Activated B cell treated with CpG ODN at 0.5 μM for 24 hours (primary cell): ENCODE measurements at regions of chr11 and their contacts with region 1.

Region 1: DNA sequence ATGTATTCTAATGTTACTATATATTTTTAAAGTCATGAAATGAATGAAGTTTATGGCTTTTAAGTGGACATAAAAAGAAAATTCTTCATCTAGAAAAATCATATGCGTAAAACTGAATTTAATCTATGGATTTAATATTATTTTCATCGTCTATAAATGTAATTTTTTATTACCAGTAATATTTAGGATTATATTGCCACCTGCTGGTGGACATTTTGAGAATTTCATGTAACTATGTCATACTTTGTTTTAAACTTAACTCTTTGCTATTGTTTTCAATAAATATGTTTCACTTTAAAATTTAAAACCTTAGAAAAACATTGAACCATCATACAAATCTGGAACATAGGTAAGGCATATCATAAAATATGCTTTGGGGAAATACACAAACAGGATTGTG is 66.5 kb upstream of the CEP126 start:
- DNase-seq: no peak
- ATAC-seq: no peak
- H3K4me3 Mint-ChIP-seq: no peak overlapping the region
- H3K27ac Mint-ChIP-seq: no peak overlapping the region
- H3K4me1 Mint-ChIP-seq: no peaks in the 10 kb centered on the region
- H3K27me3 Mint-ChIP-seq: peaks cover 4% of the 10 kb centered on the region
- CTCF ChIP-seq: no peak

Region 2: DNA sequence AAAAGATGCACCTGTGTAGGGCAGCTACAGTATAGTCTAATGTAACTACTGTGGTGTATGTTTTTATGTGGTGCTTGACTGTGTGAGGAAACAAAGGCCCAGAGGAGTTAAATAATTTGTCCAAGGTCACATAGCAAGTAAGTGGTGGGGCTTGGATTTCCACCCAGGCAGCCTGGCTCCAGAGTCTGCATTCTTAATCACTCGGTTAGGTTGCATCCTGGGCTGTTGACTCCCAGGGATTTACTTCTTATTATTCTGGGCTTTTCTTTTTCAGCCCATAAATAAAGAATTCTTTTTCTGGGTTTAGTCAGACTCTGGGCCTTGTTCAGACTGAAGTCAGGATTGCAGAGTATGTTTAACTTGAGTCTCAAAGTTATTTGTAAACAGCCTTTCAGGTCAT is 1079.1 kb before region 1 on chr11:
- CTCF ChIA-PET with region 1: no interaction called
- POLR2A ChIA-PET with region 1: no interaction called
- intact Hi-C with region 1: no loop called
- DNase-seq: no peak
- ATAC-seq: no peak
- H3K4me3 Mint-ChIP-seq: no peak overlapping the region
- H3K27ac Mint-ChIP-seq: no peak overlapping the region
- H3K4me1 Mint-ChIP-seq: no peaks in the 10 kb centered on the region
- H3K27me3 Mint-ChIP-seq: no peaks in the 10 kb centered on the region
- CTCF ChIP-seq: no peak

Region 3: DNA sequence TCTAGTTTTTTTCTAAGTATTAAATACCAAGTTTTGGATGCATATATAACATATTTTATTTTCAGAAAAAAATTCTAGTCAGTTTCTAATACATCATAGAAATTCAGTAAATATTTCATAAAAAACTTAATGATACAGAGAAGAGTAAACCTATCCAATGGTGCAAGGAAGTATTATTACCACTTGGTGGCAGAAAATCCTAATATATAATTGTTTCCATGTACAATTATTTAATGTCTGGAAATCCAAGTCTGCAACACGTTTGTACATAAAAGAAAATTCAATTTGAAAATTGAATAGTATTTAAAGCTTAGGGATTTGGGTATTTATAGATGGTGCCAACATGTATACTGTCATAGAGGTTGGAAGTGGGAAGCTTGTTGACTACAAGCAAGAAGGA is 391.4 kb before region 1 on chr11:
- CTCF ChIA-PET with region 1: interaction called, 9 read pairs
- POLR2A ChIA-PET with region 1: no interaction called
- intact Hi-C with region 1: loop called (anchors 1 kb)
- DNase-seq: no peak
- ATAC-seq: no peak
- H3K4me3 Mint-ChIP-seq: no peak overlapping the region
- H3K27ac Mint-ChIP-seq: no peak overlapping the region
- H3K4me1 Mint-ChIP-seq: no peaks in the 10 kb centered on the region
- H3K27me3 Mint-ChIP-seq: no peaks in the 10 kb centered on the region
- CTCF ChIP-seq: no peak

Region 4: DNA sequence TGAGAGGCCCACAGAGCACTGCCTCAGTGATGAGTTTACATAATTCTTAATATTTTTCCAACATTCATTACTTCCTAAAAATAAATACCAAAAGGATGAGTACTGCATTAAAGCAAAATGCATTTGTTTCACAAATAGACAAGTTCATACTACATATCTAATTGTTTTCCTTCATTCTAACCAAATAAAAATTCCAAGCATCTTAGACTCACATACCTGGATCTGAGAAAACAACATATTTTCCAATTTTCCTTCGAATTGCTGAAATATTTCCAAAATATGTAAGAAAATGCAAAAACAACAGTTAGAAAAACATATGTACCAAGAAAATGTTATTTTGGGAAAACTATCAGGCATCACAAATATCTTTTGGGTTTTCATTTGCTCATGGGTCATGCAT is 61.3 kb before region 1 on chr11:
- CTCF ChIA-PET with region 1: no interaction called
- POLR2A ChIA-PET with region 1: no interaction called
- intact Hi-C with region 1: no loop called
- DNase-seq: no peak
- ATAC-seq: no peak
- H3K4me3 Mint-ChIP-seq: no peak overlapping the region
- H3K27ac Mint-ChIP-seq: no peak overlapping the region
- H3K4me1 Mint-ChIP-seq: no peaks in the 10 kb centered on the region
- H3K27me3 Mint-ChIP-seq: no peaks in the 10 kb centered on the region
- CTCF ChIP-seq: no peak

Region 5: DNA sequence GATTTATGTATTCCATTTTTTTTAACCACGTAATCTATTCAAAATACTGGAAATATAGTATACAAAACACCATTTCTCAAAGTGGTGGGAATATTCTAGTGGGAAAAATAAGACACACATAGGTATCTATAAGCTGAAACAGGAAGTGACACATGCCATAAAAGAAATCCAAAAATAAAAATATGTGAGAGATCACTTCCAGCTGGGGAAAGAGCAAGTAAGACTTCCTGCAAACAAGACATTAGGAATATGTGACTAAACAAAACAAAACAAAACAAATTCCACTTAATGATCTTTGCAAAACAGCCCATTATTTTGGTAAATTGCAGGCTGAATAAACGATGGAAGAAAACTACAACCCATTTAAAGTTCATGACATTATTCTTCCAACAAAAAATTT is 40.7 kb before region 1 on chr11:
- CTCF ChIA-PET with region 1: no interaction called
- POLR2A ChIA-PET with region 1: no interaction called
- intact Hi-C with region 1: no loop called
- DNase-seq: no peak
- ATAC-seq: no peak
- H3K4me3 Mint-ChIP-seq: no peak overlapping the region
- H3K27ac Mint-ChIP-seq: no peak overlapping the region
- H3K4me1 Mint-ChIP-seq: no peaks in the 10 kb centered on the region
- H3K27me3 Mint-ChIP-seq: no peaks in the 10 kb centered on the region
- CTCF ChIP-seq: no peak

Region 6: DNA sequence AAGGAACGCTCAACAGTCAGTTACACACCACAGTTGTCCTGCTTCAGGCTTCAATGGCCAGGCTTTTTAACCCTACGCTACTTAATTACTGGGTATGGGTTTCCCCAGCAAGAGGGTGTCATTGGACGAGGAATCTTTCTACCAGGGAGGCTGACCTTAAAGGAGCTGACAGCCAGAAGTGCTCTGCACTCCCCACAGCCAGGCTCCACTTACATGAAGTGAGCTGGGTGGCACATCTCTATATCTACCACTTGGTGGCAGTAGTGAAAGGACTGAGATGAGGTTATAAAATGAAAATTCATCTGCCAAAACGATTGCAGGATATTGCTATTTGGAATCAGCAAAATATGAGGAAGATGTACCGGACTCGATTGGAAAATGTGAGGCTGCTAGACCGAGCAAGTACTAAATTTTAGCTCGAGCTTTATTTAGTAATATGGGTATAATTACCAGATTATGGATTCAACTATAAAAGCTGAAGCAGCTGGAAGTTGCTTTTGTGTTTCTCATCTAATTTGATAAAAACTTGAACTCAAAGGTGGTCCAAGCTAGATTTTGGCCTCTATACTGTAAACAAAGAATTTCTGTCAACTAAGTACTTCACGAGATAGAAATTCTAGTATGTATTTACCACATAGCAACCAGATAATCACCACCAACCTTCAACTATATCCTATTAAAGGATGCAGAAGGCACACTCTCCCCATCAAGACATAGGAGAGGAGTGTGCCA is 12.6 kb after region 1 on chr11:
- CTCF ChIA-PET with region 1: interaction called, 13 read pairs
- POLR2A ChIA-PET with region 1: no interaction called
- intact Hi-C with region 1: no loop called
- DNase-seq: no peak
- ATAC-seq: peak; percentile 52
- H3K4me3 Mint-ChIP-seq: no peak overlapping the region
- H3K27ac Mint-ChIP-seq: no peak overlapping the region
- H3K4me1 Mint-ChIP-seq: no peaks in the 10 kb centered on the region
- H3K27me3 Mint-ChIP-seq: peaks cover 12% of the 10 kb centered on the region
- CTCF ChIP-seq: no peak

Region 7: DNA sequence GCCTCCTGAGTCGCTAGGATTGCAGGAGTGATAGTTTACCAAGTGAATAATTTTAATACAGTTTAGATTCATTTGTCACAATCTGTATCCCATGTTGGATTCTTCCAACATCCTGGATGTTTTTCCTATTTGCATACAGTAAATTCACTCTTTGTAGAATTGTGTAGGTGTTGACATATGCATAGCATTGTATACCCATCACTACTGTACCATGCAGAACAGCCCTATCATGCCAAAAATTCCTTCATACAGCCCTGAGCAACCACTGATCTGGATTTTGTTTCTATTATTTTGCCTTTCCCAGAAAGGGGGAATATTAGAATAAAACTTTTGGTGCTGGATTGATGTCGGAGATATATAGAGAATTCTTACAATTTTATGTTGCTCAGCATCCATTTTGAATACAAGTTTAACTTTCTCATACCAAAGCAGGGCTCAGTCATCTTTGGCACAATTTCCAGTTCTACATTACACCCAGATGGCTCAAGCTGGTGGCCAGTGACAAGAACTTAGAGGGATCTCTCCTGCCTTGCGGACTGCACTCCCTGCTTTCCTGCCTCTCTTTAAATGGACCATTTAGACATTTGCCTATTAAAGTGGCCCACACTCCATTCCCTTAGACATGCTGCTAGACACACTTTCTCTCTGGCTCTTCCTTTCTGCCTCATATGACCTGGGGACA is 153.5 kb after region 1 on chr11:
- CTCF ChIA-PET with region 1: no interaction called
- POLR2A ChIA-PET with region 1: no interaction called
- intact Hi-C with region 1: no loop called
- DNase-seq: no peak
- ATAC-seq: no peak
- H3K4me3 Mint-ChIP-seq: no peak overlapping the region
- H3K27ac Mint-ChIP-seq: no peak overlapping the region
- H3K4me1 Mint-ChIP-seq: no peaks in the 10 kb centered on the region
- H3K27me3 Mint-ChIP-seq: no peaks in the 10 kb centered on the region
- CTCF ChIP-seq: no peak